Right cardiac atrium (tissue), 5 donors: ENCODE measurements at regions of chr13 and their contacts with region 1.

Region 1: DNA sequence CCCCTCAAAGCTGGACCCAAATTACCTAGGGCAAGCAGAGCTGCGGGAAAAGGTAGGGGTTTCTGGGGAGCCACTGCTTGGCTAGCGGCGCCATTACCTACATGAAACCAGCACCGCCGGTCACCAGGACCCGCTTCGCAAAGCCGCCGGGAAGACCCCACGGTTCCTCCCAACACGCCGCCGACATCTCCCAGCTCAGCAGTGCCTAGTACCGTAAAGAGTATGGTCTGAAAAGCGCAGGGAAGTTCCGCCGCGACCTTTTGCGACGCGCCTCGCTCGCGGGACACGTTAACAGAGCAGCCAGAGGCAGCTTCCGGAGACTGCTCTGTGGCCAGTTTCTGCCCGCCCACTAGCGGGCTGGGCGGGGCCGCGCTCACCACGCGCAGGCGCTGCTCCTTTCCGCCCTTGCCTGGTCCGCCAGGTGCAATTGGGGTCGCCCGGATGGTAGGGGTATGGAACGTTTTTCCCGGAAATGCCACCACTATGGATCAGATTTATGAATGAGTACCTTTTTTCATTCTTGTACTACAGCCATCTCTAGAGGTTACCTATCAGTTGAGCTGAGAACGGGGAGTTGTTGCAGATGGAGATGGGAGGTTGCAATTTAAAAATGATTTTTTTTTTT is at the start of gene TGDS:
- DNase-seq: peak; percentile 94 to 97 (median 97)
- ATAC-seq: peak; percentile 99 to 100
- H3K4me3 ChIP-seq: peak within 1 kb of the TSS; percentile 74
- H3K27ac ChIP-seq: peak within 1 kb of the TSS; percentile 57
- H3K4me1 ChIP-seq: no peaks in the 10 kb centered on the region
- H3K27me3 ChIP-seq: no peaks in the 10 kb centered on the region
- total RNA-seq, gene TGDS: 5.2 to 5.8 (median 5.5) TPM

Region 2: GRCh38 chr13:94549232-94550061 is 46.6 kb before region 1 on chr13:
- intact Hi-C with region 1: loop called in 1 of 4 experiments (anchors 10 kb)
- DNase-seq: peak; percentile 94 to 97 (median 96)
- ATAC-seq: peak; percentile 98
- H3K4me3 ChIP-seq: peak overlapping the region; percentile 84
- H3K27ac ChIP-seq: peak overlapping the region; percentile 74
- H3K4me1 ChIP-seq: no peaks in the 10 kb centered on the region
- H3K27me3 ChIP-seq: no peaks in the 10 kb centered on the region